Endothelial cell of umbilical vein (primary cell): ENCODE measurements at regions of chr4 and their contacts with region 1.

Region 1: GRCh38 chr4:166846939-166847338 is 387.4 kb downstream of the SPOCK3 start:
- DNase-seq: no peak
- H3K4me3 ChIP-seq: no peak overlapping the region
- H3K27ac ChIP-seq: no peak overlapping the region
- H3K4me1 ChIP-seq: no peaks in the 10 kb centered on the region
- H3K27me3 ChIP-seq: no peaks in the 10 kb centered on the region
- CTCF ChIP-seq: no peak
- POLR2A ChIP-seq: no peak

Region 2: GRCh38 chr4:166816890-166817289 is 30.0 kb before region 1 on chr4:
- CTCF ChIA-PET with region 1: no interaction called
- POLR2A ChIA-PET with region 1: no interaction called
- dilution Hi-C with region 1: no loop called
- intact Hi-C with region 1: no loop called
- DNase-seq: no peak
- H3K4me3 ChIP-seq: no peak overlapping the region
- H3K27ac ChIP-seq: no peak overlapping the region
- H3K4me1 ChIP-seq: no peaks in the 10 kb centered on the region
- H3K27me3 ChIP-seq: no peaks in the 10 kb centered on the region
- CTCF ChIP-seq: no peak
- POLR2A ChIP-seq: no peak

Region 3: DNA sequence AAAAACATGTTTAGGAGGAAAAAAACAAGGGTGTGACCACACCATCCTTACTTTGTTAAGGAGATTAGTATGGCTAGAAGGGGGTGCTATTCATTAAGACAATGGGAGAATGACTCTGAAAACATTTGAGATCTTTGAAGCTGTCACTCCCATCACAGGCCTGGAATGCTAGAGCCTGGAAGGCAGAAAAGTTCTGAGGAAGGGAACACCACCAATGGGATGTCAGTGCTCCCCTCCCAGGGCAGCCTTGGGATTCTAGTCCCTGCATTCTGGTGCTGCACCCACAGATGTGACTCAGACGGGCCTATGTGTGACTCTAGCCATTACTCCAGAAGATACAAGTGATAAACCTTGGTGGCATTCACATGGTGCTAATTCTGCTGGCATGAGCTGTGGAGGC is 1083.2 kb after region 1 on chr4:
- CTCF ChIA-PET with region 1: no interaction called
- POLR2A ChIA-PET with region 1: no interaction called
- dilution Hi-C with region 1: no loop called
- intact Hi-C with region 1: loop called (anchors 5 kb)
- DNase-seq: no peak
- H3K4me3 ChIP-seq: no peak overlapping the region
- H3K27ac ChIP-seq: no peak overlapping the region
- H3K4me1 ChIP-seq: no peaks in the 10 kb centered on the region
- H3K27me3 ChIP-seq: no peaks in the 10 kb centered on the region
- CTCF ChIP-seq: no peak
- POLR2A ChIP-seq: no peak